Prostate gland (tissue), 2 donors: ENCODE measurements at regions of chr6 and their contacts with region 1.

Region 1: DNA sequence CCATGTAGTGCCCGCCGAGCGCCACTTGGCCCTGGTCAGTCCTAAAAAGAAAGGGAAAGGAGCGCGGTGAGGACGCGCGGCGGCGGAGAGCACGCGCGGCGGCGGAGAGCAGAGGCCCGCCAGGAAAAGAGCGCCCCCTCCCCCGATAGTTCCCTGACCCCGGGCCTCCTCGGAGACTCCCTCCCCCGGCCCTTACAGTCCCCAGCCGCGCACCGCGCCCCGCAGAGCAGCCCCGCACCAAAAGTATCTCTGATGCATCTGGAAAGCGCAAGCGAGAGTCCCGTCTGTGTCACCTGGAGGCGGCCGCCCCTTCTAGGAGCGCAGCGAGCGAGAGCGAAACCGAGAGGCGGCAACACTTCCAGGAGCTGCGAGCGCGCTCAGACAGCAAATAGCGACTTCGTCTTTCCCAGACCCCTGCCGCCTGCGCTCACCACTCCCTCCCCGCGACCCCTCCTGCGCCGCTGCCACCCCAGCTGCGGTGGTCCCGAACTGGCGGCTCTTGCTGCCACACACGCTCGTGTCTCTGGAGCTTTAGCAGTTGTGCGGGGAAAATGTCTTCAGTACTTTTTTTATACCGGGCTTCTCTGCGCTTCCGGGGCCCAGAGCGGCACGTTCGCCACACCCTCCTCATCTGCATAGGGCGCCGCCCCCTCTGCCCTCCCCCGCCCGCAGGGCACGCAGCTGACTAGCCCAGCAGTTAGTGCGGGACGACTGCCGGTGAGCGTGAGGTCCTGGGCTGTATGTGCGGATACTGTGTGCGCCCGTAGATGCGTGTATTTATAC is at the start of gene TENT5A:
- DNase-seq: peak; percentile 94
- H3K4me3 ChIP-seq: peak within 1 kb of the TSS; percentile 74 to 84
- H3K27ac ChIP-seq: peak within 1 kb of the TSS; percentile 93 to 95
- H3K4me1 ChIP-seq: no peaks in the 10 kb centered on the region
- H3K27me3 ChIP-seq: no peaks in the 10 kb centered on the region
- CTCF ChIP-seq: peak in 1 of 4 experiments; percentile 2
- POLR2A ChIP-seq: peak; percentile 88
- total RNA-seq, gene TENT5A: 11.9 to 12.0 TPM

Region 2: GRCh38 chr6:80133020-80133419 is 1619.3 kb before region 1 on chr6:
- intact Hi-C with region 1: loop called (anchors 2 kb)
- DNase-seq: peak; percentile 41
- H3K4me3 ChIP-seq: no peak overlapping the region
- H3K27ac ChIP-seq: no peak overlapping the region
- H3K4me1 ChIP-seq: no peaks in the 10 kb centered on the region
- H3K27me3 ChIP-seq: no peaks in the 10 kb centered on the region
- CTCF ChIP-seq: peak in 3 of 4 experiments; percentile 22 to 48 (median 47)
- POLR2A ChIP-seq: no peak

Region 3: DNA sequence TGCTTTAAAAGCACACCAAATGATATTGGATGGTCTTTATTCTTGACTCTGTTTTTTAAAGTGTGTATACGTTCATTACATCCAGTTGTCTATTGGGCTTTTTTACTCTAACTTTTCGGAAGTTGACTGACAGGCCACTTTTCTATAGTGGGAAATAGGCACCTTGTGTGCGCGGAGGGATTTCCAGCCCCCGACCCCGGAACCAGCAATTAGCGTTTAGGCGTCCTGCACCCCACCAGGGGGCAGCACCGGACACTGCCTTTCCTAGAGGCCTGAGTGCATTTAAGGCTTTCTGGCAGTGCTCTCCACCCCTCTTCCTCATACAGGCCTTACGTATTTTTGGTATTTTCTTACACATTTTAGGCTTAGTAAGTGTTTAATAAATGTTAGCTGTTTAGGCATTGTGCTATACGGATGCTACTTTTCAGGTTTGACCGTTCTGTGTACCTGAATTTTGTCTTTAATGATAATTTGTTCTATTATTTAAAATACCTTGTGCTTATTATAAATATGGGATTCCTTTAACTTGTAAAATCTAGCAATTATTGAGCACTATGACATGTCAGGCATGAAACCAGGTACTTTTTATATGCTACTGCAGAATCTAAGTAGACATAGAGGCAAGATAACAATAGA is 1414.0 kb before region 1 on chr6:
- intact Hi-C with region 1: loop called (anchors 5 kb)
- DNase-seq: no peak
- H3K4me3 ChIP-seq: no peak overlapping the region
- H3K27ac ChIP-seq: no peak overlapping the region
- H3K4me1 ChIP-seq: no peaks in the 10 kb centered on the region
- H3K27me3 ChIP-seq: no peaks in the 10 kb centered on the region
- CTCF ChIP-seq: peak in 3 of 4 experiments; percentile 3 to 42 (median 42)
- POLR2A ChIP-seq: no peak

Region 4: GRCh38 chr6:81241126-81242041 is 510.9 kb before region 1 on chr6:
- intact Hi-C with region 1: loop called (anchors 10 kb)
- DNase-seq: no peak
- H3K4me3 ChIP-seq: no peak overlapping the region
- H3K27ac ChIP-seq: no peak overlapping the region
- H3K4me1 ChIP-seq: no peaks in the 10 kb centered on the region
- H3K27me3 ChIP-seq: no peaks in the 10 kb centered on the region
- CTCF ChIP-seq: peak in 1 of 4 experiments; percentile 24
- POLR2A ChIP-seq: no peak

Region 5: DNA sequence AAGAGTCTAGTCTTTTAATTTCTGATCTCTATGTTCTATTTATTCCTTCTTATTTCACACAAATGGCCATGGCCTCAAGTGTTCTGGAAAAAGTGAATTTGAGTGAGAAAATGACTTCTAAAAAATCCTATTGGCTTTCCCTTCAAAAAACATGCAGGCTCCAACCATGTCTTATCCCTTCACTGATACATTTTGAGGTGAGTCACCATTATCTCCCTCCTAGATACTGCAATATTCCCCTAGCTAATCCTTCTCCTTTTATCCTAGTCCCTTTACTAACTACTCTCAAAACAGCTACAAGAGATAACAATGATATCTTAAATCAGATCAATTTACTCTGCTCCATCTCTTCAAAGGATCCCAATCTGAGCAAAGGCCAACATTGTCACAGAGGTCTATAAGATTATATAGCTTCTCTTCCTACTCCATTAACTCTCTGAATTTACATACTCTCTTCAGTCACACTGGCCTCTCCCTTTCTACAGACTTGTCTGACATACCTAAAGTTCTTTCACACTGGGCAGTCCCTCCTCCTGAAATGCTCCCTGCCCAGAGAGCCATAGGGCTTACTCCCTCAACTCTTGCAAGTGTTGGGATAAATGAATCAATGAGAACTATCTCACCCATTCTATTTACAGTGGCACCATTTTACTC is 129.1 kb before region 1 on chr6:
- intact Hi-C with region 1: no loop called
- DNase-seq: no peak
- H3K4me3 ChIP-seq: no peak overlapping the region
- H3K27ac ChIP-seq: no peak overlapping the region
- H3K4me1 ChIP-seq: no peaks in the 10 kb centered on the region
- H3K27me3 ChIP-seq: no peaks in the 10 kb centered on the region
- CTCF ChIP-seq: no peak
- POLR2A ChIP-seq: no peak

Region 6: DNA sequence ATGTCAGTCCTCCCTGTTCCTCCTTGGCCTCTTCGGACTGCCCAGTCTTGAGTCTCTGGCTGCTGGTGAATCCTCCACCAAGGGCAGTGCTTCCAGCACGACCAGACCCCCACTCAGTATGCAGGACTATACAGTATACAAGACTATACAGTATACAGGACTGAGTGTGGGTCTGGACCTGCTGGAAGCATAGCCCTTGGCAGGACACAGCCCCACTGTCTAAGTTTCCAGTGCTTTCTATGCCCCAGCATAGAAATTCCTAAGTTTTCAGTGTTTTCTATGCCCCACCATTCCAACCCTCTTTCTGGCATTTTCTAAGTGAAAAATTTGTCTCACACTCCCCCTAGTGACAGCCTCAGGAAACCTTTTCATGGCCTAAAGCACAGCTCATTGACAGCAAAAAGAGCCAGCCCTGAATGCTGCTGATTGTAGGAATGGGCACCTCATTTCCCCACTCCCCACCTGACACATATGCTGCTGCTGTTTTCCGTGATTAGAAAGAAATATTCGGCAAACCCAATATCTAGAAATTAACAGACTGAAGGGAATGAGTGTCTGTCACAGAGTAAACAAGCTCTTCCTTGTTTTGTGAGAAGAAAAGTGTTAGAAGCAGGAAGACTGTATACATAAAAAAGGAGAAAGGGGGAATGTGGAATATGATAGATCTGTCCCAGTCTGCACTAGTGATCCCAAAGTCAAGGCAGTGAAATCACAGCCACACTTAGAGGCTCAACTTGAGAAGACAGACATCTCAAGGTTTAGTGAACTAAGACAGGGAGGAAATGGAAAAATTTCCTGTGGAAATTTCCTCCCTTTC is 288.3 kb after region 1 on chr6:
- intact Hi-C with region 1: loop called (anchors 5 kb)
- DNase-seq: peak; percentile 6
- H3K4me3 ChIP-seq: no peak overlapping the region
- H3K27ac ChIP-seq: no peak overlapping the region
- H3K4me1 ChIP-seq: no peaks in the 10 kb centered on the region
- H3K27me3 ChIP-seq: no peaks in the 10 kb centered on the region
- CTCF ChIP-seq: peak; percentile 25 to 65 (median 52)
- POLR2A ChIP-seq: no peak